ENCODE measurements at regions of chr13 and their contacts with region 1.

Region 1: DNA sequence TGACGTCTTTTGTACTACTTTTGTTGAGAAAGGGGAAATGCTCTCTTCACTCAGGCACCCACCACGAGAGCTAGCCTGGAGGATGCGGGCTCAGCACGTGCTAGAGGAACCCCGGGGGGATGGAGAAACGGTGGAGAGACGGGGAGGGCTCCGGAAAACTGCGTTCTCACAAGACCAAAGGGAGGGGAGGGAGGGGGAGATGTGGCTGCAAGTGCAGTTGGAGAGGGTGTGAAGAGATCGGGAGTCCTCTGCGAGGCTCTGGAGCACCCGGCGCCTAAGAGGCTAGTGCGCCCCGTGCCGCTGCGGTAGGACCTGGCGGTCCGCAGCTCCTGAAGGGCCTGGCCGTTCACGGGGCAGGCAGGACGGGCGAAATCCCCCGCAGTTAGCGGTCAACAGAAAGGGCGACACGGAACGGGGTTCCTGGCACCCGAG is 43.4 kb upstream of the XPO4 start:
- DNase-seq: no peak
- ATAC-seq: peak in 2 of 3 donors; percentile 47 to 51
- H3K4me3 ChIP-seq: no peak overlapping the region
- H3K4me3 Mint-ChIP-seq: no peak overlapping the region
- H3K27ac ChIP-seq: no peak overlapping the region
- H3K27ac Mint-ChIP-seq: no peak overlapping the region
- H3K4me1 ChIP-seq: peaks cover 6% of the 10 kb centered on the region
- H3K4me1 Mint-ChIP-seq: peaks cover 9 to 16% of the 10 kb centered on the region in 2 donors
- H3K27me3 ChIP-seq: no peaks in the 10 kb centered on the region
- H3K27me3 Mint-ChIP-seq: peaks cover 42 to 53% of the 10 kb centered on the region in 2 donors
- CTCF ChIP-seq: no peak

Region 2: DNA sequence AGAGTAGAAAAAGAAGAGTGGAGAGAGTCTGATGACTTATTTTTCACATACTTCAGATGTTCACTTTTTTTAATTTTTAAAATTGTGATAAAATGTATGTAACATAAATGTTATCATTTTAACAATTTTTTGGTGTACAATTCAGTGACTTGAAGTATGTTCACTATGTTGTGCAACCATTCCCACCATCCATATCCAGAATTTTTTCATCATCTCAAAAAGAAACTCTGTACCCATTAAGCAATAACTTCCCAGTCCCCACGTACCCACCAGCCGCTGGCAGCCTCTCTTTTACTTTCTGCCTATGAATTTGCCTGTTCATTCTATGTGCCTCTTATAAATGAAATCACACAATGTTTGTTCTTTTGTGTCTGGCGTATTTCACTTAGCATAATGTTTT is 187.1 kb after region 1 on chr13:
- intact Hi-C with region 1: loop called (anchors 2 kb)
- DNase-seq: no peak
- ATAC-seq: no peak
- H3K4me3 ChIP-seq: no peak overlapping the region
- H3K4me3 Mint-ChIP-seq: no peak overlapping the region
- H3K27ac ChIP-seq: no peak overlapping the region
- H3K27ac Mint-ChIP-seq: no peak overlapping the region
- H3K4me1 ChIP-seq: peaks cover 7% of the 10 kb centered on the region
- H3K4me1 Mint-ChIP-seq: peaks cover 8 to 9% of the 10 kb centered on the region in 2 donors
- H3K27me3 ChIP-seq: no peaks in the 10 kb centered on the region
- H3K27me3 Mint-ChIP-seq: peaks cover 0 to 11% of the 10 kb centered on the region in 2 donors
- CTCF ChIP-seq: no peak

Region 3: DNA sequence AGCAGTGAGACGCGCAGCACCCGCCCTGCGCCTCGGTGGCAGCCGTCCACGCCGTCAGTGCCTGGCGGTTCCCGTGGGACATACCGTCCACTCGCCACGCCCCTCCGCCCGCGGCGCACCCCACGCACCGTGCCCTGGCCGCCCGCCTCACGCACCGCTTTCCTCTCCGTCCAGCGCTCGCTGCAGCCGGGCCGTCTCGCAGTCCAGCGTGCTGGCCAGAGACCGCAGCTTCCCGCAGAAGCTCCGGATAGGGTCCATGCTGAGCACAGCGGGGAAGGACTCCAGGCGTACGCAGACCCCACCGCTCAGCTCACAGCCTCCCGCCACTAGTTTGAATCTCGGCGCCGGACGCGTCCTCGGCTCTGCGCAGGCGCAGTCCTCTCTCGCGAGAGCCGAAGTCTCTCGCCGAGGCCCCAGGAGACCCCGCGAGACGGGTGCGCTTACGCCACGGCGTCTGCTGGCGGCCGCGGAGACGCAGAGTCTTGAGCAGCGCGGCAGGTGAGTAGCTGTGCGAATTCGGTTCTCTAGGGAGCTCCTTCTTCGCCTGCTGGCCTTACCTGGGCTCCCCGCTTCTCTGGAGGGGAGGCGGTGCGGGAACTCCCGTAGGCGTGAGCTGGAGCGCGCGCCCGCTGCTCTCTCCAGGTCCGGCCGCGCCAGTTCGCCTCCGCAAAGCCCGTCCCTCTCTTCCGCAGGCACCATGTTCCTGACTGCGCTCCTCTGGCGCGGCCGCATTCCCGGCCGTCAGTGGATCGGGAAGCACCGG is 230.4 kb after region 1 on chr13 and contains the starts of genes MRPL57 and SKA3:
- intact Hi-C with region 1: loop called (anchors 1 kb)
- DNase-seq: peak; percentile 93 to 98
- ATAC-seq: peak; percentile 95 to 97 (median 95)
- H3K4me3 ChIP-seq: peak within 1 kb of the TSS; percentile 98
- H3K4me3 Mint-ChIP-seq: peak within 1 kb of the TSS; percentile 99
- H3K27ac ChIP-seq: peak within 1 kb of the TSS; percentile 94
- H3K27ac Mint-ChIP-seq: peak within 1 kb of the TSS; percentile 91 to 94
- H3K4me1 ChIP-seq: peaks cover 10% of the 10 kb centered on the region
- H3K4me1 Mint-ChIP-seq: peaks cover 18 to 20% of the 10 kb centered on the region in 2 donors
- H3K27me3 ChIP-seq: no peaks in the 10 kb centered on the region
- H3K27me3 Mint-ChIP-seq: no peaks in the 10 kb centered on the region
- CTCF ChIP-seq: no peak
- total RNA-seq, gene MRPL57: 7.8 to 9.9 (median 8.3) TPM
- total RNA-seq, gene SKA3: 1.3 to 3.2 (median 1.4) TPM